Transverse colon (tissue), 4 donors: ENCODE measurements at regions of chr4 and their contacts with region 1.

Region 1: GRCh38 chr4:168923526-168924194 is 86.4 kb downstream of the CBR4 start:
- DNase-seq: peak; percentile 54
- H3K4me3 ChIP-seq: no peak overlapping the region
- H3K27ac ChIP-seq: peak overlapping the region in 2 of 4 donors; percentile 6 to 18
- H3K4me1 ChIP-seq: no peaks in the 10 kb centered on the region
- H3K27me3 ChIP-seq: no peaks in the 10 kb centered on the region
- CTCF ChIP-seq: peak; percentile 66 to 82 (median 73)
- EP300 ChIP-seq: no peak
- POLR2A ChIP-seq: no peak

Region 2: DNA sequence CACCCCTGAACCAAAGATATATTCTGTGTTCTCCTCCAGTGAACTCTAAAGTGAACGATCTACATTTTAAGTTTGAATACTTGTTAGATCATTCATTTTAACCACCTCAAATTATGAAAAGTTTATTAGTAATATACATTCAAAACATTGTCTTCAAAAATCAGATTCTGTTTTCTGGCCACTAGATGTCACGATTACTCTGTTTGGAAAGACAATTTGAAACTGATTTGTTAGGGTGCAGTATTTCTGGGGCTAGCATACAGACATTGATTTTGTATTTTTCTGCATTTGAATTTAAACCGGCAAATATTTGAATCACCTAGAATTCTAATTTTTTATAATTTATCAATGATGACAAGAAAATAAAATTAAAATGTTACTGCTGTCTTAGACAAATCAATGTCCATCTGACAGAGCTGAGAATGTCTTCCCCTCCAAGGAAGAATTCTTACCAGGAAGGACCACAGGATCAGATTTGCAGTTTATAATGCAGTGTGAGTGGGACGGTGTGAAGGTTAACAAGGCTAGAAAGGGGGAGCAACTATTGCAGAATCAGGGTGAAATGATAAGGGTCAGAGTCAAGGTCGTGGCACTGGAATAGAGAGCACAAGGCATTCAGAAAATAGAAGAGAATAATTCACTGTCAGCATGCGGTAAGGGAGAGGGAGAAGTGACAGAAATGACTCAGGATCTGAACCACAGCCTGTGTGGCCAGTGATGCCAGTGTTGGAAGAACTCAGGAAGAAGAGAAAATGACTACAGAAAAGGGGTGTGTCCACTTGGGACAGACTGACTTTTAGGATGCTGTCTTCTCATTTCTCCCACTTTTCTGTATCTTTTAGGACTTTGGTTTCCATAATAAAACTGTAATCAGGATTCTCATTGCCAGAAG is 739.7 kb before region 1 on chr4:
- in situ Hi-C with region 1: loop called in 2 of 4 experiments (anchors 25 kb)
- intact Hi-C with region 1: no loop called
- DNase-seq: no peak
- H3K4me3 ChIP-seq: no peak overlapping the region
- H3K27ac ChIP-seq: no peak overlapping the region
- H3K4me1 ChIP-seq: peaks cover 0 to 3% (median 0%) of the 10 kb centered on the region in 4 donors
- H3K27me3 ChIP-seq: no peaks in the 10 kb centered on the region
- CTCF ChIP-seq: peak; percentile 43 to 55 (median 52)
- EP300 ChIP-seq: no peak
- POLR2A ChIP-seq: no peak

Region 3: GRCh38 chr4:168353746-168354145 is 569.9 kb before region 1 on chr4:
- in situ Hi-C with region 1: no loop called
- intact Hi-C with region 1: no loop called
- DNase-seq: no peak
- H3K4me3 ChIP-seq: no peak overlapping the region
- H3K27ac ChIP-seq: no peak overlapping the region
- H3K4me1 ChIP-seq: no peaks in the 10 kb centered on the region
- H3K27me3 ChIP-seq: no peaks in the 10 kb centered on the region
- CTCF ChIP-seq: no peak
- EP300 ChIP-seq: no peak
- POLR2A ChIP-seq: no peak